ENCODE measurements at regions of chr6 and their contacts with region 1.

Region 1: GRCh38 chr6:22320750-22321149 is 23.9 kb upstream of the PRL start:
- DNase-seq: no peak
- H3K4me3 ChIP-seq: no peak overlapping the region
- H3K27ac ChIP-seq: no peak overlapping the region
- H3K4me1 ChIP-seq: no peaks in the 10 kb centered on the region
- H3K27me3 ChIP-seq: no peaks in the 10 kb centered on the region
- CTCF ChIP-seq: no peak
- POLR2A ChIP-seq: no peak

Region 2: GRCh38 chr6:22248513-22249308 is 72.0 kb before region 1 on chr6:
- intact Hi-C with region 1: no loop called
- DNase-seq: no peak
- H3K4me3 ChIP-seq: no peak overlapping the region
- H3K27ac ChIP-seq: no peak overlapping the region
- H3K4me1 ChIP-seq: peaks cover 14% of the 10 kb centered on the region
- H3K27me3 ChIP-seq: no peaks in the 10 kb centered on the region
- CTCF ChIP-seq: no peak
- POLR2A ChIP-seq: no peak

Region 3: GRCh38 chr6:22363714-22364239 is 43.0 kb after region 1 on chr6:
- intact Hi-C with region 1: loop called (anchors 1 kb)
- DNase-seq: no peak
- H3K4me3 ChIP-seq: no peak overlapping the region
- H3K27ac ChIP-seq: no peak overlapping the region
- H3K4me1 ChIP-seq: peaks cover 38% of the 10 kb centered on the region
- H3K27me3 ChIP-seq: no peaks in the 10 kb centered on the region
- CTCF ChIP-seq: no peak
- POLR2A ChIP-seq: no peak

Region 4: DNA sequence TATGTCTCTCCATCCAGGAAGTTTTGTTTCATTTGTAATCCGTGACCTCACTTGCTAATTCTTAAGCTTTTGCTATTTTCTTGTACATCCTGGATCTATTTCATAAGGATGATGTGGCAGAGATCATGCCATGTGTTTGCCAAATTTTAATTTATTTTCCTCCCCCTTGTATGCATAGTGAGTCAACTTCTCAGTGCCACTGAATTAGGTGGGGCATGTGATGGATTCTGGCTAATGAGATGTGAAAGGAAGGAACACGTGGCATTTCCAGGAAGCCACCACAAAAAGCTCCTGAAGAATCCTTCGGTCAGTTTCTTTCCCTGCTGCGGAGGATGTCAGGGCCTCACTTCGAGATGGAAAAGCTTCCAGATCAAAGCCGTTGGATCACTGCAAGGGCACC is 62.3 kb after region 1 on chr6:
- intact Hi-C with region 1: no loop called
- DNase-seq: no peak
- H3K4me3 ChIP-seq: no peak overlapping the region
- H3K27ac ChIP-seq: no peak overlapping the region
- H3K4me1 ChIP-seq: no peaks in the 10 kb centered on the region
- H3K27me3 ChIP-seq: no peaks in the 10 kb centered on the region
- CTCF ChIP-seq: no peak
- POLR2A ChIP-seq: no peak